Common myeloid progenitor, CD34-positive (primary cell): ENCODE measurements at regions of chr16 and their contacts with region 1.

Region 1: DNA sequence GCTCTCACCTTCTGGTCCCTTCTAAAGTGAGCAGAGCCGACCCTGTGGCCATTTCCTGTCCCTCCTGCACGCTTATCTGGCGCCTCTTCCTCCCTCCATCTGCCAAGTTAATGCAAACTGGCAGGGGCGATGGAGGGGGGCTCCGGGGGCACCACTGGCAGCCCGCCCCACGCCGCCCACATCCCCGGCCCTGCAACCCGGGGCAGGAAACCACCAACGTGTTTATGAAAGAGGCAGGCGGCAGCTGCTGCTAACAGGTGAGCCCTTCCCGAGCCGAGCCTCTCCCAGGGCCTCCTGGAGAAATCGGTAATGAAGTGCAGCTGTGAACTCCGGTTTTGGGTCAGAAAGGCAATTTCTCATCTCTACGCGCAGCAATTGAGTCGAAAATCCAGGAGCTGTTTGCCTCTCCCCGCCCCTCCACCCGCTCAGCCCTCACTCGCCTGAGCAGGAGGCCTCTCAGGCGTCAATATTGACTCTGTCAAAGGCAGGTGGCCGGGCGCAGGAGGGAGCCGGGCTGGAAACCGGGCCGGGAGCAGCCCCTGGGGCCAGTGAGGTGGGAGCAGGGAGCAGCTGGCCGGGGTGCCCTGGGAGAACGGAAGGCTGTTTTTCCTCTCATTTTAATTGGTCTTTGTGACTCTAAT is 164.4 kb upstream of the GSE1 start:
- DNase-seq: peak; percentile 57 to 94 (median 89)
- H3K4me3 ChIP-seq: peak overlapping the region in 3 of 7 experiments; percentile 11 to 39 (median 19)
- H3K27ac ChIP-seq: peak overlapping the region in 1 of 2 experiments; percentile 54
- H3K4me1 ChIP-seq: peaks cover 0 to 75% (median 72%) of the 10 kb centered on the region in 4 experiments
- H3K27me3 ChIP-seq: no peaks in the 10 kb centered on the region

Region 2: GRCh38 chr16:85381738-85382592 is 66.7 kb before region 1 on chr16:
- CTCF ChIA-PET with region 1: no interaction called
- POLR2A ChIA-PET with region 1: no interaction called
- DNase-seq: peak; percentile 67 to 91 (median 84)
- H3K4me3 ChIP-seq: no peak overlapping the region
- H3K27ac ChIP-seq: peak overlapping the region in 1 of 2 experiments; percentile 45
- H3K4me1 ChIP-seq: peaks cover 4 to 91% (median 71%) of the 10 kb centered on the region in 4 experiments
- H3K27me3 ChIP-seq: no peaks in the 10 kb centered on the region

Region 3: DNA sequence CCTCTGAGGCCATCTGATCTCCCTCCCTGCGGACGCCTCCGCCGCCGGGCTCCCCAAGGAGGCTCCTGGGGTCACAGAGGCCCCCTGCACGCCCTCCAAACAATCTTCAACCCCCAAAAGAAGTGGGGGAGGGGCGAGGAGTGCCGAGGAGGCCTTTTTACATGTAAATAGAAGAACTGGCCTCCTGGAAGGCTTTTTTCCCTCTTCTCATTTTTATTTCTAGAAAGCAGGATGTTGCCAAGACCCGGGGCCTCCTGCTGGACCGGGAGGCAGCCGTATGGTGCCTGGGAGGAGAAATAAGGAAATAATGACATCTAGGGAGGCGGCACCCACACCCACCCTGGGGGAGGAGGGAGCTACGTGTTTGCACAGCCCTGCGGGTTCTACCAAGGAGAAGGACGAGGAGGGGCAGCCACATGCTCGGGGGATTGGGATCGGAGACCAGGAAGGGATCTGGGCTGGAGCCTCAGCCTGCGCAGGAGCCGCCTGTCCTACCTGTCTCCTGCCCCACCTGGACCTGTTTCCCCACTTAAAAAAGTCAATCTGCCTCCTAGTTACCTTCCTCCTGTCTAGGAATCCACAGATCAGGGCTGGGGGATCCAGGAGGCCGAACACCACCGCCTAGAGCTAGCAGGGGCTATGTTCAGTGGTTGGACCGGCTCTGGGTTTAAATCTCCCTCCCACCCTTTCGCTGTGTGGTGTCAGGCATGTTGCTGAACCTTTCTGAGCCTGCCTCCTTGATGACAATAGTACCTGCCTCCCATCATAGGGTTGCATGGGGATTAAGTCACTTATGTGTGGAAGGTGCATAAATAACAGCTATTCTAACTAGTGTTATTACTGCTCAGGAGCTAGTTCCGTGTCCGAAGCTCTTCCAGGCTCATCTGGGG is 11.3 kb before region 1 on chr16:
- CTCF ChIA-PET with region 1: interaction called, 19 read pairs
- POLR2A ChIA-PET with region 1: no interaction called
- DNase-seq: peak in 2 of 3 donors; percentile 31 to 34
- H3K4me3 ChIP-seq: peak overlapping the region in 2 of 7 experiments; percentile 19 to 38
- H3K27ac ChIP-seq: peak overlapping the region in 1 of 2 experiments; percentile 40
- H3K4me1 ChIP-seq: peaks cover 3 to 23% (median 16%) of the 10 kb centered on the region in 4 experiments
- H3K27me3 ChIP-seq: no peaks in the 10 kb centered on the region

Region 4: GRCh38 chr16:85461814-85462713 is 13.4 kb after region 1 on chr16:
- CTCF ChIA-PET with region 1: interaction called, 29 read pairs
- POLR2A ChIA-PET with region 1: interaction called, 5 read pairs
- DNase-seq: peak; percentile 53 to 87 (median 81)
- H3K4me3 ChIP-seq: peak overlapping the region in 6 of 7 experiments; percentile 29 to 65 (median 50)
- H3K27ac ChIP-seq: peak overlapping the region in 1 of 2 experiments; percentile 49
- H3K4me1 ChIP-seq: peaks cover 0 to 40% (median 38%) of the 10 kb centered on the region in 4 experiments
- H3K27me3 ChIP-seq: peaks cover 0 to 3% (median 0%) of the 10 kb centered on the region in 5 experiments

Region 5: GRCh38 chr16:85471444-85472431 is 23.1 kb after region 1 on chr16:
- CTCF ChIA-PET with region 1: interaction called, 13 read pairs
- POLR2A ChIA-PET with region 1: interaction called, 3 read pairs
- DNase-seq: no peak
- H3K4me3 ChIP-seq: no peak overlapping the region
- H3K27ac ChIP-seq: no peak overlapping the region
- H3K4me1 ChIP-seq: peaks cover 0 to 37% (median 16%) of the 10 kb centered on the region in 4 experiments
- H3K27me3 ChIP-seq: no peaks in the 10 kb centered on the region

Region 6: DNA sequence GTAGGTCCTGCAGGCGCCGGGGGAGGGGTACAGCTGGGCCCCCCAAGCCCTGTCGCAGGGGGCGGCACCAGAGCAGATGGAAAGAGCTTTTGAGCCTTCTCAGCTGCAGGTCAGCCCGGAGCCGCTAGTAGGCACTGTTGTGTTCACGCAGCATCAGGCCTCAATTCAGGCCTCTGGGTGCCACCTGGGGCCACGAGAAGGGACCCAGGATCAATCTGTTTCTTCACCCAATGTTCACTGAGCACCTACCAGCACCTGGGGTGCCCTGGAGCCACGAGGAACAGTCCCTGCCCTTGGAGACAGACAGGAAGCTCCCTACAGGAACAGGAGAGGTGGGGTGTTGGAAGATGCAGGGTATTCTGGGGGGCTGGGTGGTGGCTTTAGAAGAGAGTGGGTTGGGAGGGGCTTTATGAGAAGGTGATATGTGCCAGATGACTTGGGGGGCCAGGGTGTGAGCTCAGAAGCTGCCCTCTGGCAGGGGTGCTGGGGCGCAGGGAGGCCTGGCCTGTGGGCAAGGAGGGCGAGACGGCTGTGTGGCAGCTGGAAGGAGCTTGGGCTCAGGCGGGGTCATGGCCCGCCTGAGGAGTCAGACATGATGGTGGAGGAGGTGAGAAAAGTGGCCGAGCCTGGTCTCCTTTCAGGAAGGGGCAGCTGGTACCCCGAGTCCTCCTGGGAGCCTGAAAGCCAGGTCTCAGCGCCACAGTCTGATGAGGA is 42.5 kb after region 1 on chr16:
- CTCF ChIA-PET with region 1: interaction called, 10 read pairs
- POLR2A ChIA-PET with region 1: interaction called, 3 read pairs
- DNase-seq: peak; percentile 33 to 55 (median 34)
- H3K4me3 ChIP-seq: no peak overlapping the region
- H3K27ac ChIP-seq: no peak overlapping the region
- H3K4me1 ChIP-seq: peaks cover 0 to 37% (median 16%) of the 10 kb centered on the region in 4 experiments
- H3K27me3 ChIP-seq: no peaks in the 10 kb centered on the region

Region 7: DNA sequence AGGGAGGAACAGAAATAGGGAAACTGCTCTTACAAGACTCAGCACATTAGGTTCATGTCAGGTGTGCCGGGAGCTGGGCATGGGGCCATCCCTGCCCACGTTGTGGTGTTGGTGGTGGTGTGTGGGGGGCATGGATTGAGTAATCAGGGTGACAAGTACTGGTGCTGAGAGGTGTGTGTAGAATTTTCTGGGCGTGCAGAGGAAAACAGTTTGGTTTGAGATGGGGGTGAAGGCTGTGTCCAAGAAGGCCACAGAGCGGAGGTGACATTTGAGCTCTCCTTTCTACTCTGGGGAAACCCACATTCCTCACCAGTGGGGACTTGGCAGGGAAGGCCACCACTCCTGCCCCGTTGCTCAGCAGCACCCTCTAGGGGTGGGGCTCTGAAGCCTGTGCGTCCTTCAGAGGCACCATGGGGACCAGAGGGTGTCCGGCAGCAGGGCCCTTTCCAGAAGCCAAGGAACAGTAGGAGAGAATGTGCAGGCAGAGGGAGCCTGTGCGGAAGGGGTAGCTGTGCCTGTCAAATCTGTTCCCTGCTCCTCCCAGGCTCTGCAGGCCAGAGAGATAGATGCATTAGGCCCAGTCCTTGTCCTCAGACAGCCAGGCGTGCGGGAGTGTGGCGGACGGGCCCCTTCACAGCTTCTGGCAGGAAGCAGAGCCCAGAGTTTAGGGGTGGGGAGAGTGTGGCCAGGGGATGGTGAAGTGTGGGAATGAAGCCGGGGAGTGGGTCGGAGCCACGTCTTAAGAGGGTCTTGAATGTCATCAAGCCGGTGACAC is 115.8 kb after region 1 on chr16:
- CTCF ChIA-PET with region 1: interaction called, 11 read pairs
- POLR2A ChIA-PET with region 1: no interaction called
- DNase-seq: peak; percentile 63 to 72 (median 68)
- H3K4me3 ChIP-seq: no peak overlapping the region
- H3K27ac ChIP-seq: no peak overlapping the region
- H3K4me1 ChIP-seq: peaks cover 0 to 88% (median 81%) of the 10 kb centered on the region in 4 experiments
- H3K27me3 ChIP-seq: no peaks in the 10 kb centered on the region

Region 8: GRCh38 chr16:85610508-85611332 is 162.0 kb after region 1 on chr16:
- CTCF ChIA-PET with region 1: interaction called, 11 read pairs
- POLR2A ChIA-PET with region 1: interaction called, 5 read pairs
- DNase-seq: peak; percentile 84 to 88 (median 86)
- H3K4me3 ChIP-seq: peak overlapping the region in 5 of 7 experiments; percentile 36 to 85 (median 65)
- H3K27ac ChIP-seq: peak overlapping the region; percentile 23 to 71
- H3K4me1 ChIP-seq: peaks cover 3 to 73% (median 60%) of the 10 kb centered on the region in 4 experiments
- H3K27me3 ChIP-seq: no peaks in the 10 kb centered on the region